Activated naive CD4-positive, alpha-beta T cell treated with anti-CD3 and anti-CD28 coated beads for 36 hours (primary cell): ENCODE measurements at regions of chrX and their contacts with region 1.

Region 1: GRCh38 chrX:129961180-129962083 is 21.0 kb upstream of the BCORL1 start:
- DNase-seq: peak; percentile 84
- H3K4me3 Mint-ChIP-seq: peak overlapping the region; percentile 76
- H3K27ac Mint-ChIP-seq: peak overlapping the region; percentile 86
- H3K4me1 Mint-ChIP-seq: peaks cover 11% of the 10 kb centered on the region
- H3K27me3 Mint-ChIP-seq: no peaks in the 10 kb centered on the region

Region 2: GRCh38 chrX:129925305-129926092 is 35.9 kb before region 1 on chrX:
- CTCF ChIA-PET with region 1: interaction called, 13 read pairs
- intact Hi-C with region 1: no loop called
- DNase-seq: peak; percentile 81
- H3K4me3 Mint-ChIP-seq: no peak overlapping the region
- H3K27ac Mint-ChIP-seq: no peak overlapping the region
- H3K4me1 Mint-ChIP-seq: peaks cover 3% of the 10 kb centered on the region
- H3K27me3 Mint-ChIP-seq: no peaks in the 10 kb centered on the region

Region 3: GRCh38 chrX:129996120-129996519 is 34.7 kb after region 1 on chrX:
- CTCF ChIA-PET with region 1: no interaction called
- intact Hi-C with region 1: no loop called
- DNase-seq: no peak
- H3K4me3 Mint-ChIP-seq: no peak overlapping the region
- H3K27ac Mint-ChIP-seq: no peak overlapping the region
- H3K4me1 Mint-ChIP-seq: no peaks in the 10 kb centered on the region
- H3K27me3 Mint-ChIP-seq: no peaks in the 10 kb centered on the region